Activated CD4-positive, alpha-beta T cell treated with anti-CD3 and anti-CD28 coated beads for 36 hours (primary cell): ENCODE measurements at regions of chr6 and their contacts with region 1.

Region 1: DNA sequence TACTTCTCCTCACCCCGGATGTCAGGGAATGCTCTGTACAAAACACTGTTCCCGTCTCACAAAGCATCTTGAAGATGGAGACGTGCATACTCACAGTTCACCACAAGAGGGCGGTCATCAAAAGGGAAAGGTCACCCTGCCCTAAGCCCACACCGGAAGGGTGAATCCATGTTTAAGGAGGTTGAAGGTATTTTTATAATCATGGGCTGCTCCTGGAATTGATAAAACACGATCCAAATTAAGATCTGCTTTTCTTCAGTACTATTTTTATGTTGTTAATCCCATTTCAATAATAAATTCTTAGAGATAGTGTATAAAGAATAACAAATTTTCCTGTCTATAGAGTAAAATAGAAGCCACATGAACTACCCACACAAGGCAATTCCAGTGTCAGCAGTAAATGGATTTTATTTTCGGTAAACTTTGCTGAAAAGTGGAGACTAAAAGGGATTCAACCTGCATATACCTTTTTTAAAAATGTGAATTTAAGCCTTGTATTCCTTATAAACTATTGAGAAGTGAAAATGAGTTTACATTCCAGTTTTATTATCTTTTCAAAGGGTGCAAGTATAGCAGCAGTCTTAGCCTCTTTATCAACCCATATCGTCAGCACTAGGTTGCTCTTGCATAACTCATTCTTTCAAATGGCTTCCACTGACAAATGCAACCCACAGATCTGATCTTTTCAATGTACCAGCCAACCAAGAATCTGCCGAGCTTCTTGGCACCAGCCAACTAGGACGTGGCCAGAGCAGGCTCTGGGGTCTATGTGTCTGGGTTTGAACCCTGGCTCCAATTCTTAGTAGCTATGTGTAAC is 79.7 kb upstream of the MBOAT1 start:
- DNase-seq: peak; percentile 87
- ATAC-seq: peak; percentile 90
- H3K4me3 Mint-ChIP-seq: peak overlapping the region; percentile 16
- H3K27ac Mint-ChIP-seq: peak overlapping the region; percentile 8
- H3K4me1 Mint-ChIP-seq: peaks cover 21% of the 10 kb centered on the region
- H3K27me3 Mint-ChIP-seq: no peaks in the 10 kb centered on the region

Region 2: DNA sequence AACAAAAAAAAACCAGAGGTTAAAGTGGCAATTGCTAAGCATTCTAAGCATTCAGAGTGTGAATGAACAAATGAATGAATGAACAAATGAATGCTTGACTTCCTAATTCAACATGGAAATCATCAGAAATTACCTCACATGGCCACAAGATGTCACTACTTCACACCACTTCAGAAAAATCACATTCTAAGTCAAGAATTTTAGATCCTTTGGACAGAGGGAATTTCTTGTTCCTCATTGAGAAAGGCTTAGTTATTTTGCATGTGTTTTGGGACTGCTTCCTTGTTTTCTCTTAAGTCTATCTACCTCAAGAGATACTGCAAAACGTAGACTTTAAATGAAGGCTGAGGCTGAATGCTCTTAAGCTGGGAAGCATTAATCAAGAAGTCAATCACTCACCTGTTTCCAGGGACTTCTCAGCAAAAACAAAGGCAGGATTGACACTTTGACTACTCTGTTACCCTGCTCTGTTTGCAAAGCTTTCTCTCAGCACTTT is 199.9 kb before region 1 on chr6:
- CTCF ChIA-PET with region 1: interaction called, 8 read pairs
- POLR2A ChIA-PET with region 1: no interaction called
- intact Hi-C with region 1: loop called in 1 of 2 experiments (anchors 1 kb)
- DNase-seq: no peak
- ATAC-seq: peak; percentile 23
- H3K4me3 Mint-ChIP-seq: no peak overlapping the region
- H3K27ac Mint-ChIP-seq: no peak overlapping the region
- H3K4me1 Mint-ChIP-seq: no peaks in the 10 kb centered on the region
- H3K27me3 Mint-ChIP-seq: no peaks in the 10 kb centered on the region

Region 3: GRCh38 chr6:20134613-20135012 is 157.4 kb before region 1 on chr6:
- CTCF ChIA-PET with region 1: no interaction called
- POLR2A ChIA-PET with region 1: no interaction called
- intact Hi-C with region 1: no loop called
- DNase-seq: no peak
- ATAC-seq: no peak
- H3K4me3 Mint-ChIP-seq: no peak overlapping the region
- H3K27ac Mint-ChIP-seq: no peak overlapping the region
- H3K4me1 Mint-ChIP-seq: peaks cover 12% of the 10 kb centered on the region
- H3K27me3 Mint-ChIP-seq: no peaks in the 10 kb centered on the region

Region 4: GRCh38 chr6:20279608-20280287 is 12.2 kb before region 1 on chr6:
- CTCF ChIA-PET with region 1: interaction called, 14 read pairs
- POLR2A ChIA-PET with region 1: no interaction called
- intact Hi-C with region 1: no loop called
- DNase-seq: no peak
- ATAC-seq: no peak
- H3K4me3 Mint-ChIP-seq: no peak overlapping the region
- H3K27ac Mint-ChIP-seq: no peak overlapping the region
- H3K4me1 Mint-ChIP-seq: no peaks in the 10 kb centered on the region
- H3K27me3 Mint-ChIP-seq: peaks cover 42% of the 10 kb centered on the region